ENCODE measurements at regions of chr6 and their contacts with region 1.

Region 1: DNA sequence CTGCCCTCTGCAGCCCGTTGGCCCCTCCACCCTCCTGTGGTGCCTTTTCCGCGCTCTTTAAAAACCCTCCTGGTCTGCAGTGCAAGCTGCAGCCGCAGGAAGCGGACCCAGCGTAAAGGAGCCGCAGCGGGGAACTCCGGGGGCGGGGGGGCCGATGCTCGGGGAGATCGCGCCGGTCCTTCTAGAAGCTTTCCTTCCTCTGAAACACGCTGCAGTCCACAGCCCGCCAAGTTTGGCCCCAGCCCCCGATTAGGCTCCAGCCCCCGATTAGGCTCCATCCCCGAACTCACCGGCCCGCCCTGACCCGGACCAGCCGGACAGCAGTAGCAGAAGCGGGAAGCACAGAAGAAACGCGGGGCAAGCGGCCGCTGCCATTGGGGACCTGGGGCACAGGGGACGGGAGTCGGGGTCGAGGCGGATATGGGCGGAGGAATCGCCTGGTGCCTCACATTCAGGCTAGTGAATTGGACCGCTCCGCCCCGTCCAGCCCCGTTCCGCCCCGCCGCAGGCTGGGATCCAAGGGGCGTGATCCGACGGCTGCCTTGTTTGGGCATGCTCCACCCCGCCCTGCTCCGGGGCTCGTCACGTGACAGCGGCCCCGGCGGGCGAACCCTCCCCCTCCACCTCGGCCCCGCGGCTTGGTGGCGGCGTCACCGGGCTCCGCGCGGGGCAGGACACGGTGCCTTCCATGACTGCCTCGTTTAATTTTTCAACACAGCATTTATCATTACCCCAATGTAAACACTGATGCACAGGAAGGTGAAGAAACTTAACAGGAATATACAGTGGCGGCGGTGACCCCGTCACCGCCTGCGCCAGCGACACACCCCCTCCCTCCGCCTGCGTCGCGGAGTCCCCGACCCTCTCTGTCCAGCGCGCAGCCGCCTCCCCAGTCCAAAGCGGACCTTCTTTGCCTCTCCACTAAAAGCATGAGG is 20.3 kb downstream of the RAET1L start:
- DNase-seq: peak; percentile 92
- H3K4me3 Mint-ChIP-seq: peak overlapping the region; percentile 84
- H3K27ac Mint-ChIP-seq: peak overlapping the region; percentile 74
- H3K4me1 Mint-ChIP-seq: peaks cover 49% of the 10 kb centered on the region
- H3K27me3 Mint-ChIP-seq: peaks cover 27% of the 10 kb centered on the region

Region 2: GRCh38 chr6:149717588-149718458 is 287.2 kb before region 1 on chr6 and contains the start of gene LATS1:
- intact Hi-C with region 1: loop called (anchors 10 kb)
- DNase-seq: peak; percentile 88
- H3K4me3 Mint-ChIP-seq: peak within 1 kb of the TSS; percentile 96
- H3K27ac Mint-ChIP-seq: peak within 1 kb of the TSS; percentile 97
- H3K4me1 Mint-ChIP-seq: peaks cover 31% of the 10 kb centered on the region
- H3K27me3 Mint-ChIP-seq: no peaks in the 10 kb centered on the region
- total RNA-seq, gene LATS1: 27.8 and 28.4 TPM in 2 replicates

Region 3: GRCh38 chr6:149863697-149864577 is 141.1 kb before region 1 on chr6 and contains the start of gene LRP11:
- intact Hi-C with region 1: loop called (anchors 5 kb)
- DNase-seq: peak; percentile 78
- H3K4me3 Mint-ChIP-seq: peak within 1 kb of the TSS; percentile 83
- H3K27ac Mint-ChIP-seq: no peak within 1 kb of the TSS
- H3K4me1 Mint-ChIP-seq: peaks cover 5% of the 10 kb centered on the region
- H3K27me3 Mint-ChIP-seq: peaks cover 32% of the 10 kb centered on the region
- total RNA-seq, gene LRP11: 3.6 and 4.3 TPM in 2 replicates

Region 4: GRCh38 chr6:149963462-149964307 is 41.4 kb before region 1 on chr6 and contains the start of gene ULBP1:
- intact Hi-C with region 1: loop called (anchors 2 kb)
- DNase-seq: peak; percentile 78
- H3K4me3 Mint-ChIP-seq: peak within 1 kb of the TSS; percentile 85
- H3K27ac Mint-ChIP-seq: peak within 1 kb of the TSS; percentile 81
- H3K4me1 Mint-ChIP-seq: peaks cover 20% of the 10 kb centered on the region
- H3K27me3 Mint-ChIP-seq: peaks cover 83% of the 10 kb centered on the region
- total RNA-seq, gene ULBP1: 0.41 and 0.48 TPM in 2 replicates

Region 5: GRCh38 chr6:150068720-150069648 is 63.9 kb after region 1 on chr6 and contains the start of gene ULBP3:
- intact Hi-C with region 1: loop called (anchors 5 kb)
- DNase-seq: peak; percentile 57
- H3K4me3 Mint-ChIP-seq: peak within 1 kb of the TSS; percentile 70
- H3K27ac Mint-ChIP-seq: peak within 1 kb of the TSS; percentile 36
- H3K4me1 Mint-ChIP-seq: peaks cover 21% of the 10 kb centered on the region
- H3K27me3 Mint-ChIP-seq: peaks cover 29% of the 10 kb centered on the region
- total RNA-seq, gene ULBP3: 0.52 and 0.53 TPM in 2 replicates